CD8-positive, alpha-beta T cell (primary cell): ENCODE measurements at regions of chr7 and their contacts with region 1.

Region 1: DNA sequence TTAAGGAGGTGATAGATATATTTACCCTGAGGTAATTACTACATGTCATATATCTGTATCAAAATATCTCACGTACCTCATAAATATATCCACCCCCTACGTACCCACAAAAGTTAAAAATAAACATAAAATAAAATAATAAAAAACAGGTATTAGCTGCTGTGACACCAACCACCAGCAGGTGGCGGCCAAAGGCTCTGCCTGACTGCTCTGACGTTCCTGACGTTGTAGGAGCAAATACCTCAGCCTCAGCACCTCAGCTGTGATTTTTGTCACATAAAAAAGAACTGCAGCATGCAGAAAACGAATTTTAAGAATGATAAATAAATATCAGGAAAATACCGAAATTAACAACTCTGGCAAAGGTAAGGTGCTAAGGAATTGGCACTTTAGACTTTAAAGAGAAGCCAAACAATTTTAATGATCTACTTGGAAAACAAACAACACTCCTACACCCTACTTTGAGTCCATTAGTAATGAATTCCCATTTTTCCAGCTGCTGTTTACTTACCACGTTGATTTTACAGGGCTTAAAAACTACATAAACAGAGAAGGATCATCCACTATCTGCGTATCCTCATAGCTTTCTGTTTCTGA is 125.4 kb upstream of the TARP start:
- DNase-seq: peak in 8 of 9 experiments; percentile 35 to 71 (median 56)
- ATAC-seq: peak; percentile 82
- H3K4me3 ChIP-seq: no peak overlapping the region
- H3K4me3 Mint-ChIP-seq: no peak overlapping the region
- H3K27ac ChIP-seq: no peak overlapping the region
- H3K27ac Mint-ChIP-seq: no peak overlapping the region
- H3K4me1 ChIP-seq: no peaks in the 10 kb centered on the region
- H3K4me1 Mint-ChIP-seq: peaks cover 6% of the 10 kb centered on the region
- H3K27me3 ChIP-seq: no peaks in the 10 kb centered on the region
- H3K27me3 Mint-ChIP-seq: no peaks in the 10 kb centered on the region
- CTCF ChIP-seq: peak; percentile 94

Region 2: DNA sequence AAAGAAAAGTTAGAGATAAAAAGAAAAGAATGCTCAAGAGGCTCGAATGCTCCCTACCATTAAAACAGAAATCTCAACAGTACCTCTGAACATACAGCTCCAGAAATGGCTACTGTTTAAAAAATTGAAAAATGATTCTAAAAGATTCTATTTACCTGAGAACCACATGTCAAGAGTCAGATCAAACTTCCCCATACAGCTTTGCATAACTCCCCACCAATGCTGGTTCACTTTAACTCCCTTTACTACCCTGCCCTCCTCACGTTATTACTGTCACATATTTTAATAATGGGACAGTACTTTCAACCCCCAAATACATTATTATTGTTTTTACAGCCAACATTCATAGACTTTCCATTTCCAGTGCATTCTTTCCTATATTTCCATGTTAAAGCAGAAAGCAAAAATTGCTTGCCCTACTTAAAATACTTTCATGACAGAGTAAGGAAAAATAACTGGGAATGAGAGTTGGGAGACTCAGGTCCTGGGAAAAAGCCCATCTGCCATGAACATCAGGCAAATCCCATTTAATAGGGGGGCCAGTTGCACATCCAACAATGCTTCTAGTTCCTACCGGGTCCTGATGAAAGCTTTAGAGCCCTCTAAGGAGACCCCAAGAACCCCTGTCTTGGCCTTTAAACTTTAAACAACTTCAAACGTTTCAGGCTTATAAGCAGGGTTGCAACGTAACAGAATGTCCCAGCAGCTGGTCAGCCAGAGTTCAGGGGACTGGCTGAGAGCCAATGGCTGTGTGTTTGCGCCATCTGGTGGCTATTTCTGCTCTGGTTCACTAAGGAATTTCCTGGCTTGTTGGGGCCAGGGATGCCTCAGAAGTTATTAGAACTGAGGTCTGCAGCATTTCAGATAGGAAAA is 1197.6 kb before region 1 on chr7:
- CTCF ChIA-PET with region 1: no interaction called
- POLR2A ChIA-PET with region 1: no interaction called
- intact Hi-C with region 1: no loop called
- DNase-seq: peak; percentile 6 to 65 (median 48)
- ATAC-seq: no peak
- H3K4me3 ChIP-seq: no peak overlapping the region
- H3K4me3 Mint-ChIP-seq: no peak overlapping the region
- H3K27ac ChIP-seq: no peak overlapping the region
- H3K27ac Mint-ChIP-seq: peak overlapping the region; percentile 34
- H3K4me1 ChIP-seq: no peaks in the 10 kb centered on the region
- H3K4me1 Mint-ChIP-seq: peaks cover 4% of the 10 kb centered on the region
- H3K27me3 ChIP-seq: no peaks in the 10 kb centered on the region
- H3K27me3 Mint-ChIP-seq: no peaks in the 10 kb centered on the region
- CTCF ChIP-seq: peak; percentile 45

Region 3: GRCh38 chr7:37585195-37585463 is 813.7 kb before region 1 on chr7:
- CTCF ChIA-PET with region 1: no interaction called
- POLR2A ChIA-PET with region 1: no interaction called
- intact Hi-C with region 1: no loop called
- DNase-seq: no peak
- ATAC-seq: no peak
- H3K4me3 ChIP-seq: no peak overlapping the region
- H3K4me3 Mint-ChIP-seq: no peak overlapping the region
- H3K27ac ChIP-seq: no peak overlapping the region
- H3K27ac Mint-ChIP-seq: no peak overlapping the region
- H3K4me1 ChIP-seq: no peaks in the 10 kb centered on the region
- H3K4me1 Mint-ChIP-seq: no peaks in the 10 kb centered on the region
- H3K27me3 ChIP-seq: no peaks in the 10 kb centered on the region
- H3K27me3 Mint-ChIP-seq: peaks cover 23% of the 10 kb centered on the region
- CTCF ChIP-seq: no peak

Region 4: DNA sequence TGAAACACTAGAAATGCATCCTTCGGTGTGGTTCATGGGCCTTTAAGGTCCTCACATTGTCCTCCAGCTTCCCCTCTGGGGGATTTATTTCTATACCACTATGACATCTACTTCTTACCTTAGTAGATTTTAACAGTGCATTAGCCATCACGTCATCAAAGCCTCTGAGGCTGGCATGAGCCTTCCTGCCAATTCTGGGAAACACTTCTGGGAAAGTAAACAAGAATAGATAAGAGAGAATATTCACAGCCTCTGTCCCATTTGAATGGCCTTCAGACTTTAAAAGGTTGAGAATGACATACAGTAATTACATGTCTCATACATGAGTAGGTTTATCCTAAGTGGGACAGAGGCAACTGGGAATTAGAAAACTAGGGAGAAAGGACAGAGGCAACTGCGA is 142.6 kb after region 1 on chr7:
- CTCF ChIA-PET with region 1: interaction called, 4 read pairs
- POLR2A ChIA-PET with region 1: no interaction called
- intact Hi-C with region 1: loop called (anchors 1 to 2 kb)
- DNase-seq: no peak
- ATAC-seq: no peak
- H3K4me3 ChIP-seq: no peak overlapping the region
- H3K4me3 Mint-ChIP-seq: no peak overlapping the region
- H3K27ac ChIP-seq: no peak overlapping the region
- H3K27ac Mint-ChIP-seq: no peak overlapping the region
- H3K4me1 ChIP-seq: no peaks in the 10 kb centered on the region
- H3K4me1 Mint-ChIP-seq: no peaks in the 10 kb centered on the region
- H3K27me3 ChIP-seq: no peaks in the 10 kb centered on the region
- H3K27me3 Mint-ChIP-seq: peaks cover 2% of the 10 kb centered on the region
- CTCF ChIP-seq: no peak

Region 5: GRCh38 chr7:38660427-38661099 is 261.7 kb after region 1 on chr7:
- CTCF ChIA-PET with region 1: interaction called, 47 read pairs
- POLR2A ChIA-PET with region 1: no interaction called
- intact Hi-C with region 1: loop called (anchors 1 kb)
- DNase-seq: peak in 2 of 9 experiments; percentile 48 to 58
- ATAC-seq: peak; percentile 58
- H3K4me3 ChIP-seq: no peak overlapping the region
- H3K4me3 Mint-ChIP-seq: no peak overlapping the region
- H3K27ac ChIP-seq: no peak overlapping the region
- H3K27ac Mint-ChIP-seq: no peak overlapping the region
- H3K4me1 ChIP-seq: no peaks in the 10 kb centered on the region
- H3K4me1 Mint-ChIP-seq: no peaks in the 10 kb centered on the region
- H3K27me3 ChIP-seq: no peaks in the 10 kb centered on the region
- H3K27me3 Mint-ChIP-seq: peaks cover 16% of the 10 kb centered on the region
- CTCF ChIP-seq: peak; percentile 65

Region 6: DNA sequence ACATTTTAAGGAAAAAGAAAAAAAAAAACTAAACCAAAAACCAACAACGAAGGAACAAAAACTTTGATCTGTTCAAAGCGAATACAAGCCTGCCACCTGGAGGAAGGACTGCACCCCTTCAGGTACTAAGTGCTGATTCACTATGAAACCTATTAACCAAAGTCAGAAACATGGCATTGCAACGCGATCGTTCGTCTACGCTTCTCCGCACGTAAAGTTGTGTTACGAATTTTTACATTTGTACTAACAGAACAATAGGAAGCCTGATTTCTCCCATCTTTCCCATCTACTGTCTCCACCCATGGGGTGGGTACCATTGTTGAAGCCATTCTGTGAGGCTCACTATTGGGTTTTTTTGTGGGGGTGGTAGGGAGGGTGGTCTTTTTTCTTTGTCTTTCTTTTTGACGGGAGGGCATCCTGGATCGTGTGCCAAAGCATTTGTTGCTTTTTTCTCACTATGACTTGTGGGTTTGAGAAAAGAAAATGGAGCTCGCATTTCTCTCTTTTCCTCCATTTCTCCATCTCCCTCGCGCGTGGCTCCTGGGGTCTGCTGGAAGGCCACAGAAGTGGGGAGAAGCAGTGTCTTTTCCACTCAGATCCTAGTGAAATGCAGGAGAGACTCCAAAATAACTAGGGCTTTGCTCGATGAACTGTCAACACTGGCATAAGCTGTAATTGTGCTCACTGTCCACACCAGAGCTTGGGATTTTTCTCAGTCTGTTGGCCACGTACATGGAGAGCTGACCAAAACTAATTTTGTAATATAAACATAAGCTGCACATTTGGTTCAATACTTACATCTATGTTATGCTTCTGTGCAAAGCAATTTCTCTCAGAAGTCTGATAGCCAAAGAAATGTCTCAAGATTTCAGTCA is 1066.5 kb after region 1 on chr7:
- CTCF ChIA-PET with region 1: no interaction called
- POLR2A ChIA-PET with region 1: no interaction called
- intact Hi-C with region 1: loop called in 1 of 2 experiments (anchors 5 kb)
- DNase-seq: peak in 5 of 9 experiments; percentile 19 to 52 (median 27)
- ATAC-seq: peak; percentile 34
- H3K4me3 ChIP-seq: no peak overlapping the region
- H3K4me3 Mint-ChIP-seq: no peak overlapping the region
- H3K27ac ChIP-seq: no peak overlapping the region
- H3K27ac Mint-ChIP-seq: no peak overlapping the region
- H3K4me1 ChIP-seq: no peaks in the 10 kb centered on the region
- H3K4me1 Mint-ChIP-seq: peaks cover 5% of the 10 kb centered on the region
- H3K27me3 ChIP-seq: no peaks in the 10 kb centered on the region
- H3K27me3 Mint-ChIP-seq: peaks cover 6% of the 10 kb centered on the region
- CTCF ChIP-seq: peak; percentile 55